CD4-positive, alpha-beta memory T cell (primary cell): ENCODE measurements at regions of chr5 and their contacts with region 1.

Region 1: DNA sequence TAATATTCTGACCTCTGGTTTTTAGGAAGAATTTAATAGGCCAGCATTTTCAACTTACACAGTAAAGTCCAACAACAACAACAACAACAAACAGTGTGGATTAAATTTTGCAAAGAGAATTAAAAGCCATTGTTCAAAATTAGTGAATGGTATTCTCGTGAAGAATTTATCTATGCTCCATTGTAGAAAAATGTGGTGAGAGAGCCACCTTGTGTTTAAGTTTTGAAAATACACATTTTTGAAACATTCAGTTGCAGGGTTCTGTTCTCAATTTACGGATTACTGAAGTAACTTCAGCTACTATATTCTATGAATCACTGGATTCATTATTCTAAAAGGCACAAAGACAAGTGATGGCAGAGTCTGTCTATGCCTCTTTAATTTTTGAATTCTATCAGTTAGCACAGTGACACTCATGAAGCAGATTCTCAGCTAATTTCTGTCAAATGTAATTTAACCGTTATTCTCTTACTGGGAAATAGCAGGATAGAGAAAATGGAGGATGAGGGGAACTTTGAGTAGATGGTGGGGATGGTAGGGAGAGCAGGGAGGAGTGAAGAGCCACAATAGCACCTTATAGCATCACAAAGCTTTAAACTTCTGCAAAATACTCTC is 11.0 kb downstream of the CCDC152 start:
- DNase-seq: peak in 4 of 5 donors; percentile 29 to 40 (median 33)
- H3K4me3 ChIP-seq: no peak overlapping the region
- H3K4me3 Mint-ChIP-seq: no peak overlapping the region
- H3K27ac ChIP-seq: no peak overlapping the region
- H3K27ac Mint-ChIP-seq: no peak overlapping the region
- H3K4me1 ChIP-seq: no peaks in the 10 kb centered on the region
- H3K4me1 Mint-ChIP-seq: no peaks in the 10 kb centered on the region
- H3K27me3 ChIP-seq: no peaks in the 10 kb centered on the region
- H3K27me3 Mint-ChIP-seq: peaks cover 5 to 6% of the 10 kb centered on the region in 2 donors

Region 2: GRCh38 chr5:42005561-42006153 is 761.9 kb before region 1 on chr5:
- CTCF ChIA-PET with region 1: interaction called, 6 read pairs
- POLR2A ChIA-PET with region 1: no interaction called
- intact Hi-C with region 1: loop called (anchors 1 kb)
- DNase-seq: peak in 3 of 5 donors; percentile 2 to 21 (median 5)
- H3K4me3 ChIP-seq: no peak overlapping the region
- H3K4me3 Mint-ChIP-seq: no peak overlapping the region
- H3K27ac ChIP-seq: no peak overlapping the region
- H3K27ac Mint-ChIP-seq: no peak overlapping the region
- H3K4me1 ChIP-seq: no peaks in the 10 kb centered on the region
- H3K4me1 Mint-ChIP-seq: peaks cover 0 to 2% (median 0%) of the 10 kb centered on the region in 4 donors
- H3K27me3 ChIP-seq: no peaks in the 10 kb centered on the region
- H3K27me3 Mint-ChIP-seq: peaks cover 2 to 6% of the 10 kb centered on the region in 2 donors

Region 3: GRCh38 chr5:42423285-42424165 is 344.1 kb before region 1 on chr5 and contains the start of gene GHR:
- CTCF ChIA-PET with region 1: interaction called, 15 read pairs
- POLR2A ChIA-PET with region 1: no interaction called
- intact Hi-C with region 1: loop called (anchors 5 kb)
- DNase-seq: peak in 3 of 5 donors; percentile 1 to 7 (median 5)
- H3K4me3 ChIP-seq: peak within 1 kb of the TSS in 1 of 2 donors; percentile 19
- H3K4me3 Mint-ChIP-seq: no peak within 1 kb of the TSS
- H3K27ac ChIP-seq: no peak within 1 kb of the TSS
- H3K27ac Mint-ChIP-seq: no peak within 1 kb of the TSS
- H3K4me1 ChIP-seq: peaks cover 8% of the 10 kb centered on the region
- H3K4me1 Mint-ChIP-seq: no peaks in the 10 kb centered on the region
- H3K27me3 ChIP-seq: no peaks in the 10 kb centered on the region
- H3K27me3 Mint-ChIP-seq: peaks cover 17 to 22% of the 10 kb centered on the region in 2 donors
- total RNA-seq, gene GHR: not detected

Region 4: DNA sequence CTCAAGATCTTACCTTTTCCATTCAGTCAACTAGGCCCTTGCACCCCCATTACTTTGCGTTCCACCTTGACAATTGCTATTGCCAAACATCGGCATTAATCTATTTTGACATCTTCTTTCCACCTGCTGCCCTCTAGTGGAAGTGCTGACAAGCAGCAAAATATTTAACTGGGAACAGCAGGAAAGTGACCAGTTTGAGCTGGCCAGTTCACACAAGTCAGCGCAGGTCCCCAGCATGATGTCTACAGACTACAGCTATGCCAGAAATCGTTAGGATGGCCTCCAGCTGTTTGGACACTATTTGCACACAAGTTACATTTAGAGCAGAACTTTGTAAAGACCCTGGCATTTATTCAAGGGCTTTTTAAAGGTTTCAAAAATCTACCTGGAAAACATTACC is 184.3 kb before region 1 on chr5:
- CTCF ChIA-PET with region 1: interaction called, 12 read pairs
- POLR2A ChIA-PET with region 1: no interaction called
- intact Hi-C with region 1: loop called (anchors 1 kb)
- DNase-seq: peak in 4 of 5 donors; percentile 22 to 36 (median 30)
- H3K4me3 ChIP-seq: no peak overlapping the region
- H3K4me3 Mint-ChIP-seq: no peak overlapping the region
- H3K27ac ChIP-seq: no peak overlapping the region
- H3K27ac Mint-ChIP-seq: peak overlapping the region in 1 of 7 donors; percentile 1
- H3K4me1 ChIP-seq: no peaks in the 10 kb centered on the region
- H3K4me1 Mint-ChIP-seq: peaks cover 0 to 6% (median 2%) of the 10 kb centered on the region in 4 donors
- H3K27me3 ChIP-seq: no peaks in the 10 kb centered on the region
- H3K27me3 Mint-ChIP-seq: peaks cover 9% of the 10 kb centered on the region in 2 donors

Region 5: DNA sequence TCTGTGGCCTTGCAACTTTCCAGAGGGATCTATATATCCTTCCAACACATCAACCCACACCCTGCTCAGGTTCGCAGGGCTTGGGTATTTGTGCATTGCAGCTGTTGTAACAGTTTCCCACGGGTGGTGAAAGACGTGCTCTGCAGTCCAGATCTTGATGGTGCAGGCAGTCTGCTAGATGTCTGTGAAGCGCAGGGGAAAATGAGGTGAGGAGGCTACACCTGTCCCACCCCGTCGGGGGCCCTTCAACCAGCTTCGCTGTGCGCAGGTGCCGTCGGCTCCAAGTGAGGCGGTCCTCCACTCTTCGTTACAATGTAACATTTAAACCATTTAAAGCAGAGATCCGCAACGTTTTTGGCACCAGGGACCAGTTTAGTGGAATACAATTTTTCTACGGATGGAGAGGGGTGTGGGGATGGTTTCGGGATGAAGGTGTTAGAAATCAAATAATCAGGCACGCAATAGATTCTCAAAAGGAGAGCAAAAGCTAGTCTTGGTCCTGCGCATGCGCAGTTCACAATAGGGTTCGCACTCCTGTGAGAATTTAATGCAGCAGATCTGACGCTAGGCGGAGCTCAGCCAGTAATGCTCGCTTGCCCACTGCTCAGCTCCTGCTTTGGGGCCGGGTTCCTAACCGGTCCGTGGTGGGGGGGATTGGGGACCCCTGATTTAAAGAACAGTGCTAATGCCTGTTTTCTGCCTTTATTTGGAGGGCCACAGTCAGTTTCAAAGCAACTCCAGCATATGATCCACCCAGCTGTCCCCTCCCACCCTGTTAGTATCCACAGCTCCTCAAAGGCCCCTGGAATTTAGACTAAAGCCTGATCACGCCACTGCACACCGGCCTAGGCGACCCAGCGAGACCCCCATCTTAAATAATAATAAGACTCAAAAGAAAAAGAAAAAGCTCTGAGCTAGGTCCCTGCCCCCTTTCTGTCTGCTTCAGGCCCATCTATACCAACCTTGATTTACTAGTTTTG is 141.2 kb after region 1 on chr5:
- CTCF ChIA-PET with region 1: no interaction called
- POLR2A ChIA-PET with region 1: no interaction called
- intact Hi-C with region 1: no loop called
- DNase-seq: peak; percentile 89 to 90 (median 89)
- H3K4me3 ChIP-seq: peak overlapping the region; percentile 40 to 56
- H3K4me3 Mint-ChIP-seq: peak overlapping the region; percentile 88 to 97 (median 93)
- H3K27ac ChIP-seq: peak overlapping the region; percentile 44
- H3K27ac Mint-ChIP-seq: peak overlapping the region; percentile 66 to 97 (median 95)
- H3K4me1 ChIP-seq: peaks cover 7% of the 10 kb centered on the region
- H3K4me1 Mint-ChIP-seq: peaks cover 8 to 18% (median 12%) of the 10 kb centered on the region in 4 donors
- H3K27me3 ChIP-seq: no peaks in the 10 kb centered on the region
- H3K27me3 Mint-ChIP-seq: peaks cover 10% of the 10 kb centered on the region in 2 donors

Region 6: DNA sequence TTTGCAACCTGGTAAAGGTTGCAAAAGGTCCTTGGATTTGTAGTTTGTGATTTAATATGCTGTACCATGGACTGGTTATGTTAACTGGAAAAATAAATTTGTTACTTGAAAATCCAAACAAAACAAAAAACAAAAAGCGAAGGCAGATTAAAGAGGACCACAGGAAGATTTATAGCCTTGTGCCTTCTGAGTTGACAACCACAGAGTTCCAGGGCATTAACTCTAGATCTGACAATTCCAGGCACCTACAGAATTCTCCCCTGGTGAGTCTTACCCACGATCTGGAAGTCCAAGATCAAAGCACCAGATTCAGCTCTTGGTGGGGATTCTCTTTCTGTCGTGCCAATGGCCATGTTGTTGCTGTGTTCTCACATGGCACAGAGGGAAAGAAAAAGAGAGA is 152.0 kb after region 1 on chr5:
- CTCF ChIA-PET with region 1: no interaction called
- POLR2A ChIA-PET with region 1: no interaction called
- intact Hi-C with region 1: no loop called
- DNase-seq: no peak
- H3K4me3 ChIP-seq: no peak overlapping the region
- H3K4me3 Mint-ChIP-seq: no peak overlapping the region
- H3K27ac ChIP-seq: no peak overlapping the region
- H3K27ac Mint-ChIP-seq: no peak overlapping the region
- H3K4me1 ChIP-seq: no peaks in the 10 kb centered on the region
- H3K4me1 Mint-ChIP-seq: peaks cover 0 to 2% (median 0%) of the 10 kb centered on the region in 4 donors
- H3K27me3 ChIP-seq: no peaks in the 10 kb centered on the region
- H3K27me3 Mint-ChIP-seq: no peaks in the 10 kb centered on the region